K562 (cell line): ENCODE measurements at regions of chr11 and their contacts with region 1.

Region 1: DNA sequence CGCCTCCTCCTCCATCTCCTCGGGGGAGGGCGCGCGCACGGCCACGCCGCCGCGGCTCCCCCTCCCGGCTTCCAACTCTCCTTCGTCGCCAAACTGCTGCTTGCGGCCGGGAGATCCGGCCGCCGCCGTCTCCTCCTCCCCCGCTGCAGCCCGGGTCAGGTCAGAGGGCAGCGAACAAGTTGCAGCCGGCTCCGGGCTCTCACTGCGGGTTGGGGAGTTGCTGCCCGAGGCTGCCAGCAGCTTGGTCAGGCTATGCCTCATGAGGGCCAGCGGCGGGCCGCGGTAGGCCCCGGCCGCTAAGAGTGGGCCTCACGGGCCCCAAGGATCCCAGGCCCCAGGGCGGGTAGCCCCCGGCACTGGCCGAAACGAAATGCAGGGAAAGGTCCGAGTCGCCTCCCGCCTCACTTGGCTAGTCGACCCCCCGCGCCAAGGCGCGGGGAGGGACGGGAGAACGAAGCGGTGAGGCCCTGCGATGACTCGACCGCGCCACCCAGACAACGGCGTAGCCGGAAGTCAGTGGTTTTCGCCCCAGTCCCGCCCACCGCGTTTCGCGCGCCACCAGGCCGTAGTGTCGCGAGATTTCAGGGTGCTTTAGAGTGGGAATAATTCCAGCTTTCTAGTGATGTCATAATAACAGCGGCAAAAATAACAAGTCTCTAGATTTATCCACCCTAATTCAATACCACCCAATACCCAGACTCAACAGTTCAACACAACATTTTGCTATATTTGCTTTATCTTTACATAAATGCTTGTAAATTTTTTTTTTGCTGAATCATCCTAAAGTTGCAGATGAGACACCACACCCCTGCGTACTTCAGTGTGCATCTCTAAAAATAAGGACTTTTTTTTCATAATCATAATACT is at the start of gene CREBZF:
- DNase-seq: peak; percentile 90 to 98 (median 92)
- ATAC-seq: peak; percentile 88
- H3K4me3 ChIP-seq: peak within 1 kb of the TSS; percentile 94
- H3K27ac ChIP-seq: peak within 1 kb of the TSS; percentile 98
- H3K4me1 ChIP-seq: peaks cover 5 to 14% of the 10 kb centered on the region in 2 experiments; a peak in 3 of 5 replicates
- H3K27me3 ChIP-seq: no peaks in the 10 kb centered on the region
- CTCF ChIP-seq: no peak; a peak in 1 of 6 replicates
- EP300 ChIP-seq: no peak
- POLR2A ChIP-seq: peak; percentile 93
- RAD21 ChIP-seq: no peak
- polyA plus RNA-seq, gene CREBZF: 7.2 to 7.4 TPM

Region 2: GRCh38 chr11:85359859-85360258 is 305.0 kb before region 1 on chr11:
- CTCF ChIA-PET with region 1: no interaction called
- POLR2A ChIA-PET with region 1: no interaction called
- in situ Hi-C with region 1: no loop called
- intact Hi-C with region 1: no loop called
- DNase-seq: no peak
- ATAC-seq: no peak
- H3K4me3 ChIP-seq: no peak overlapping the region
- H3K27ac ChIP-seq: no peak overlapping the region
- H3K4me1 ChIP-seq: no peaks in the 10 kb centered on the region
- H3K27me3 ChIP-seq: no peaks in the 10 kb centered on the region
- CTCF ChIP-seq: no peak
- EP300 ChIP-seq: no peak
- POLR2A ChIP-seq: no peak
- RAD21 ChIP-seq: no peak

Region 3: GRCh38 chr11:85530634-85531033 is 134.2 kb before region 1 on chr11:
- CTCF ChIA-PET with region 1: no interaction called
- POLR2A ChIA-PET with region 1: no interaction called
- in situ Hi-C with region 1: no loop called
- intact Hi-C with region 1: no loop called
- DNase-seq: no peak
- ATAC-seq: no peak
- H3K4me3 ChIP-seq: no peak overlapping the region
- H3K27ac ChIP-seq: no peak overlapping the region
- H3K4me1 ChIP-seq: no peaks in the 10 kb centered on the region
- H3K27me3 ChIP-seq: no peaks in the 10 kb centered on the region
- CTCF ChIP-seq: no peak
- EP300 ChIP-seq: no peak
- POLR2A ChIP-seq: no peak
- RAD21 ChIP-seq: no peak

Region 4: GRCh38 chr11:85627998-85628770 is 36.7 kb before region 1 on chr11 and contains the start of gene TMEM126B:
- CTCF ChIA-PET with region 1: no interaction called
- POLR2A ChIA-PET with region 1: no interaction called
- in situ Hi-C with region 1: no loop called
- intact Hi-C with region 1: loop called (anchors 1 kb)
- DNase-seq: peak; percentile 89 to 98 (median 91)
- ATAC-seq: peak; percentile 99
- H3K4me3 ChIP-seq: peak within 1 kb of the TSS; percentile 70
- H3K27ac ChIP-seq: peak within 1 kb of the TSS; percentile 90
- H3K4me1 ChIP-seq: peaks cover 5 to 6% of the 10 kb centered on the region in 2 experiments; a peak in 3 of 5 replicates
- H3K27me3 ChIP-seq: no peaks in the 10 kb centered on the region
- CTCF ChIP-seq: no peak
- EP300 ChIP-seq: peak; percentile 49; the same call in 1 of the 2 replicates
- POLR2A ChIP-seq: peak; percentile 90
- RAD21 ChIP-seq: no peak
- polyA plus RNA-seq, gene TMEM126B: 209 to 226 TPM

Region 5: DNA sequence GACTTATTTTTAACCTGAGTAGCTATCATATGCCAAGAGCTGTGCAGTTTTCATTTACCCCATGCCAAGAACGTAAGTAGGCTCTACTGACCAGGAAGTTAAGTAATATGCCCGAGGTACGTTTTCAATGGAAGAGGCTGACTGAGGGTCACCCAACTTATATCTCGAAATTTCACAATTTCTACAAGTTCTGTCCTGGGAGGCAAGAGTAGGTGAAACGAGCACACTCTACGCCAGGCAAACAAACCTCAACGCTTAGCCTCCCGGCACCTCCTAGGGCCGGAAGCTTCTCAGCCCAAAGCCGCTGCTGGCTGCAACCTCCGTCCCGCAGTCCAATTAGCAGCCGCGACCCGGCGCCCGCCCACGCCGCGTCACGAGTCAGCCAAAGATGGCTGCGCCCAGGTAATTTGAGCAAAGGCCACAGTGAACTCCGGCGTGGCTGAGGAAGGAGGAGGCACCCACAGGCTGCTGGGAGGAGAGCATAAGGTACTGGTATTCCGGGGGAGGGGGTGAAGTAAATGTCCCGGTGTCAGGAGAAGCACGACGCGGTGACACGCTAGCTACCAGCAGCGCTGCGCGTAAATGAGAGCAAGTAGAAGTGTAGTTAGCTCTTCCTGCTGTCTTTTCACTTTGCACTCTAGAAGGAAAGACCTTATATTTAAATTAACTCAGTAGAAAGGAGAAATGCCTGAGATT is 17.1 kb before region 1 on chr11 and contains the start of gene TMEM126A:
- CTCF ChIA-PET with region 1: no interaction called
- POLR2A ChIA-PET with region 1: interaction called, 145 read pairs
- in situ Hi-C with region 1: no loop called
- intact Hi-C with region 1: loop called (anchors 2 kb)
- DNase-seq: peak; percentile 71 to 97 (median 82)
- ATAC-seq: peak; percentile 94
- H3K4me3 ChIP-seq: peak within 1 kb of the TSS; percentile 54
- H3K27ac ChIP-seq: peak within 1 kb of the TSS; percentile 88
- H3K4me1 ChIP-seq: peaks cover 6 to 10% of the 10 kb centered on the region in 2 experiments; a peak in 3 of 5 replicates
- H3K27me3 ChIP-seq: no peaks in the 10 kb centered on the region
- CTCF ChIP-seq: no peak
- EP300 ChIP-seq: peak; percentile 47; the same call in 1 of the 2 replicates
- POLR2A ChIP-seq: peak; percentile 96
- RAD21 ChIP-seq: 0 out of 4 replicates have a peak, but pooled peaks of 1 of the 2 experiments have one; percentile 22
- polyA plus RNA-seq, gene TMEM126A: 148 to 154 TPM

Region 6: DNA sequence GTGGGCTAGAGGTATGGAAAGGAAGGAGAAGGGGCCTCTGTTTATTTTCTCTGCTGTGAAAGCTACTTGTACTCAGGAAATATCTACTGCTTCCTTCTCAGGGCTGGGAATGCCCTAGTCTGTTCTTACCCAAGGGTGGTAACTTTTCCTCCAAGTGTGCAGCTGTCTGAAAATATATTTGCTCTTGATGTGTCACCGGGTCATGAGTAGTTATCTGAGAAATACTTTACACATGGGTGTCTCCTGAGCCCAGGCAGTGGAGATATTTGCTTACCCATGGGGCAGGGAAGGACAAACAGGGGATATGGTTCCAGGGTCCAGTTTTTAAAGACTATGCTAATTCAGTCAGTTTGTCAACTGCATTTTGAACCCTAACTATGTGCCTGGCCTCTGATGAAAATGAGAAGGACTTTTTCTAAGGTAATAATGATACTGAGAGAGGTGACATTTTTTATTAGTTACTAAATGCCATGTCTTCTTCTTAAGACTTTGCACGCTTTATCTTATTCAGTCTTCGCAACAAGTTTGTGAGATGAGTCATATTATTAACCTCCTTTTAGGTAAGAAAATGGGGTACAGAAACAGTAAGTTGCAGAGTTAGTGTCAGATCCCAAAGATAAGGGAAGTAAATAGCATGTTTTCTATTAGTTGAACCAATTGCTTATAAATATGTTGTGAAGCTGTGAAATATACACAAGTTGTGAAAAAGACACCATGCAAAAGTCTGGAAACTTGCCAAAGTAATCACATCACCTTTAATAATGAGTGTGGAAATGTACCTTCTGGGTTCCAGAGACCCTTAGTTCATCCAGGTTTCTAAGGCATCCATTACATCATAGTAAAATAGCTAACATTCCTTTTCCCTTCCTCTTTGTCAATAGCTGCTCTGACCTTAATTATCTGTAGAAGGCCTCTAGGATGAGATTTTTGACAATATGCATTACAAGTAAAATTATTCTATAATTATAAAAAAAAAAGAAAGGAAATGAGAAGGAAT is 123.3 kb after region 1 on chr11:
- CTCF ChIA-PET with region 1: no interaction called
- POLR2A ChIA-PET with region 1: no interaction called
- in situ Hi-C with region 1: no loop called
- intact Hi-C with region 1: no loop called
- DNase-seq: no peak
- ATAC-seq: no peak
- H3K4me3 ChIP-seq: no peak overlapping the region
- H3K27ac ChIP-seq: no peak overlapping the region
- H3K4me1 ChIP-seq: no peaks in the 10 kb centered on the region
- H3K27me3 ChIP-seq: no peaks in the 10 kb centered on the region
- CTCF ChIP-seq: no peak
- EP300 ChIP-seq: no peak
- POLR2A ChIP-seq: no peak
- RAD21 ChIP-seq: no peak

Region 7: GRCh38 chr11:85867751-85868150 is 202.9 kb after region 1 on chr11:
- CTCF ChIA-PET with region 1: no interaction called
- POLR2A ChIA-PET with region 1: no interaction called
- in situ Hi-C with region 1: no loop called
- intact Hi-C with region 1: no loop called
- DNase-seq: no peak
- ATAC-seq: no peak
- H3K4me3 ChIP-seq: no peak overlapping the region
- H3K27ac ChIP-seq: no peak overlapping the region
- H3K4me1 ChIP-seq: no peaks in the 10 kb centered on the region
- H3K27me3 ChIP-seq: peaks cover 4 to 5% of the 10 kb centered on the region in 2 experiments; a peak in 3 of 5 replicates
- CTCF ChIP-seq: no peak
- EP300 ChIP-seq: no peak
- POLR2A ChIP-seq: no peak
- RAD21 ChIP-seq: no peak

Region 8: GRCh38 chr11:86174101-86175046 is 509.5 kb after region 1 on chr11:
- CTCF ChIA-PET with region 1: no interaction called
- POLR2A ChIA-PET with region 1: no interaction called
- in situ Hi-C with region 1: no loop called
- intact Hi-C with region 1: loop called (anchors 10 kb)
- DNase-seq: peak; percentile 76 to 87 (median 78)
- ATAC-seq: peak; percentile 45
- H3K4me3 ChIP-seq: no peak overlapping the region
- H3K27ac ChIP-seq: peak overlapping the region; percentile 81
- H3K4me1 ChIP-seq: peaks cover 54 to 76% of the 10 kb centered on the region in 2 experiments
- H3K27me3 ChIP-seq: no peaks in the 10 kb centered on the region; a peak in 1 of 5 replicates
- CTCF ChIP-seq: no peak
- EP300 ChIP-seq: peak; percentile 90
- POLR2A ChIP-seq: no peak; the same call in 1 of the 2 replicates
- RAD21 ChIP-seq: no peak

Region 9: GRCh38 chr11:86244522-86245368 is 579.9 kb after region 1 on chr11 and contains the start of gene EED:
- CTCF ChIA-PET with region 1: no interaction called
- POLR2A ChIA-PET with region 1: no interaction called
- in situ Hi-C with region 1: no loop called
- intact Hi-C with region 1: loop called (anchors 10 kb)
- DNase-seq: peak; percentile 90 to 97 (median 92)
- ATAC-seq: peak; percentile 87
- H3K4me3 ChIP-seq: peak within 1 kb of the TSS; percentile 89
- H3K27ac ChIP-seq: peak within 1 kb of the TSS; percentile 100
- H3K4me1 ChIP-seq: peaks cover 7 to 39% of the 10 kb centered on the region in 2 experiments; a peak in 4 of 5 replicates
- H3K27me3 ChIP-seq: no peaks in the 10 kb centered on the region
- CTCF ChIP-seq: no peak
- EP300 ChIP-seq: 0 out of 2 replicates have a peak, but pooled peaks have one; percentile 30
- POLR2A ChIP-seq: peak; percentile 96
- RAD21 ChIP-seq: no peak
- polyA plus RNA-seq, gene EED: 108 to 110 TPM